ENCODE measurements at regions of chrX and their contacts with region 1.

Region 1: DNA sequence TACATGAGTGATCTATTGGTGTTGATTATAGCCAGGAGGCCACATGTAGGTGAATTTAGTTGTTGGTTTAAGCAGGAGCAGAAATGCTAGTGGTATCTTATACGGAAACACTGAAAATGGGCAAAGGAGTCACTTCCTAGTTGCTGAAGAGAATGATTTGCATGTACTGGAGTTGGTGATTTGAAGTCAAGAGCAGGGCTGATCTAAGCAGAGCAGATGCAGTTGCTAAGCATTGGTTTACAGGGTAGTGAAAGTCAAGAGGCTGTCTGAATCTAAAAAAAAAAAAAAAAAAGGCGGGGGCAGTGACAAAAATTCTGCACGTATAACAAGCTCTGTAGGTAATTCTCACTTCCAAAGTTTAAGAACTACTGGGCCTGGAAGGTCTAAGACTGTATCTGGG is 90.4 kb upstream of the HPRT1 start:
- DNase-seq: no peak
- H3K4me3 ChIP-seq: no peak overlapping the region
- H3K27ac ChIP-seq: no peak overlapping the region
- H3K4me1 ChIP-seq: no peaks in the 10 kb centered on the region
- H3K27me3 ChIP-seq: peaks cover 0 to 19% of the 10 kb centered on the region in 2 donors
- CTCF ChIP-seq: no peak
- POLR2A ChIP-seq: no peak

Region 2: DNA sequence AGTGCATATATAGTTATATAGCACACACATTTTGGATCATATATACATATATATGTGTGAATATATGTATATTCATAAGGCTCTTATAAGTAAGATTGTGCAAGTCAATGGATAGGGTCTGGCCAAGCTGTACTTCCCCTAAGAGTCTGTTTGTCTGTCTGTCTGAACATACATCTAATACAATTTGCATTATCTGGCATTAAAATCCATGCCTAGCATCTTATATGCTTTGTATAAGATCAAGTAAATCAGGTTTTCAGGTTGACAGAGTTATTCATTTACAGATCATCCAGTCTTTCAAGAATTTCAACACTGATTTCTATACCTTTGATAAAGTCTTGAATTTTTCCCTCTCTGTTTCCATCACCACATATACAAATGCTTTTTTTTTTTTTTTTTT is 1227.2 kb before region 1 on chrX:
- intact Hi-C with region 1: loop called (anchors 10 kb)
- DNase-seq: no peak
- H3K4me3 ChIP-seq: no peak overlapping the region
- H3K27ac ChIP-seq: no peak overlapping the region
- H3K4me1 ChIP-seq: no peaks in the 10 kb centered on the region
- H3K27me3 ChIP-seq: peaks cover 0 to 45% of the 10 kb centered on the region in 2 donors
- CTCF ChIP-seq: no peak
- POLR2A ChIP-seq: no peak

Region 3: GRCh38 chrX:133323431-133323830 is 1046.1 kb before region 1 on chrX:
- intact Hi-C with region 1: no loop called
- DNase-seq: no peak
- H3K4me3 ChIP-seq: no peak overlapping the region
- H3K27ac ChIP-seq: no peak overlapping the region
- H3K4me1 ChIP-seq: no peaks in the 10 kb centered on the region
- H3K27me3 ChIP-seq: peaks cover 0 to 44% of the 10 kb centered on the region in 2 donors
- CTCF ChIP-seq: no peak
- POLR2A ChIP-seq: no peak